Thyroid gland (tissue), 4 donors: ENCODE measurements at regions of chr2 and their contacts with region 1.

Region 1: DNA sequence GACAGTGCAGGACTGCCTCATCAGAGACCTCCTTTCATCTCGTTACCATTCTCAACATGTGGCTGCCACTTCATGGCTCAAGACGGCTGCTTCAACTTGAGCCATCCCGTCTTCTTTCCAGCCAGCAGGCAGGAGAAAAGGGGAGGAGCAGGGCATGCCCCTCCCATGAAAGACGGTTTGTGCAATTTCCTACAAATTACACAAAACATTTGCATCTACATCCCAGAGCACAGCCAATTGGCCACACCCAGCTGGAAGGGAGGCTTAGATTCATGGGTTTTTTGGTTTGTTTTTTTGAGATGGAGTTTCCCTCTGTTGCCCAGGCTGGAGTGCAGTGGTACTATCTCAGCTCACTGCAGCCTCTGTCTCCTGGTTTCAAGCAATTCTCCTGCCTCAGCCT is 11.8 kb downstream of the UCN start:
- DNase-seq: no peak
- H3K4me3 ChIP-seq: no peak overlapping the region
- H3K27ac ChIP-seq: no peak overlapping the region
- H3K4me1 ChIP-seq: peaks cover 7 to 16% of the 10 kb centered on the region in 2 donors
- H3K27me3 ChIP-seq: no peaks in the 10 kb centered on the region
- CTCF ChIP-seq: no peak
- POLR2A ChIP-seq: no peak

Region 2: DNA sequence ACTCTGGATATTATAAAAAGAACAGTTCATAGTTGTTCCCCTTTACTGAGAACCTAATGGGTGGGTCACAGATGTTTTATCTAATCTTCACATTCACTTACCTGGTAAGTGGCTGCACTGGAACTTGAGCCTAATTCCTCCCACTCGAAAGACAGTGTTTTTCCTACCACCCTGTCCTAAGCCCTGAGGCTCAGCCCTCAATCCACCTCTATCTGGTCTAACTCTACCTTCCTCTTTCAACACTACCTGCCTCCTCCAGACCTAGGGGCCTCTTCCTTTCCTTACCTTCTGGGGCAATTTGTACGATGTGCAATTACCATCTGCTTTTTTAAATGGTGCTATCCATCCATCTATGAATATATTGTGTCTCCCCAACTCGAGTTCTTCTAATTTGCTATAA is 1304.5 kb before region 1 on chr2:
- intact Hi-C with region 1: no loop called
- DNase-seq: no peak
- H3K4me3 ChIP-seq: no peak overlapping the region
- H3K27ac ChIP-seq: peak overlapping the region in 1 of 3 donors; percentile 27
- H3K4me1 ChIP-seq: peaks cover 7 to 12% of the 10 kb centered on the region in 2 donors
- H3K27me3 ChIP-seq: no peaks in the 10 kb centered on the region
- CTCF ChIP-seq: no peak
- POLR2A ChIP-seq: no peak

Region 3: GRCh38 chr2:27016801-27017325 is 279.6 kb before region 1 on chr2:
- intact Hi-C with region 1: no loop called
- DNase-seq: peak; percentile 72 to 76
- H3K4me3 ChIP-seq: no peak overlapping the region
- H3K27ac ChIP-seq: no peak overlapping the region
- H3K4me1 ChIP-seq: peaks cover 6 to 20% of the 10 kb centered on the region in 2 donors
- H3K27me3 ChIP-seq: no peaks in the 10 kb centered on the region
- CTCF ChIP-seq: peak in 5 of 6 experiments; percentile 49 to 80 (median 70)
- POLR2A ChIP-seq: no peak

Region 4: DNA sequence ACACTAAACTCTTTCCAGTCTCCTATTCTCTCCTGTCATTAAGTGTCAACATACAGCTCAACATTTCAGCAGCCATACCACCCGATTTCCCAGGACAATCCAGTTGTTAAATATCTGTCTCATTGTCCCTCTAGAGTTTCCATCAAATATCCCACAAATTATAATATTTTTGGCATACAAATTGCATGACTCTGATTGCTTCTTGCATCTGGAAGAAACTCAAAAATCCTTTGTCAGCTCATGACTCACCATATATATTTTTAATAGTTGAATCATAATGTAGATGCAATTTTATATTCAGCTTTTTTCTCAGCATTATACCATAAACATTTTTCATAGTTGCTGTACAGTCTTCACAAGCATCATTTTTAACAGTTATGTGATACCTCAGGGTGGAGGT is 40.8 kb before region 1 on chr2:
- intact Hi-C with region 1: loop called (anchors 5 kb)
- DNase-seq: no peak
- H3K4me3 ChIP-seq: no peak overlapping the region
- H3K27ac ChIP-seq: no peak overlapping the region
- H3K4me1 ChIP-seq: no peaks in the 10 kb centered on the region
- H3K27me3 ChIP-seq: no peaks in the 10 kb centered on the region
- CTCF ChIP-seq: no peak
- POLR2A ChIP-seq: no peak

Region 5: DNA sequence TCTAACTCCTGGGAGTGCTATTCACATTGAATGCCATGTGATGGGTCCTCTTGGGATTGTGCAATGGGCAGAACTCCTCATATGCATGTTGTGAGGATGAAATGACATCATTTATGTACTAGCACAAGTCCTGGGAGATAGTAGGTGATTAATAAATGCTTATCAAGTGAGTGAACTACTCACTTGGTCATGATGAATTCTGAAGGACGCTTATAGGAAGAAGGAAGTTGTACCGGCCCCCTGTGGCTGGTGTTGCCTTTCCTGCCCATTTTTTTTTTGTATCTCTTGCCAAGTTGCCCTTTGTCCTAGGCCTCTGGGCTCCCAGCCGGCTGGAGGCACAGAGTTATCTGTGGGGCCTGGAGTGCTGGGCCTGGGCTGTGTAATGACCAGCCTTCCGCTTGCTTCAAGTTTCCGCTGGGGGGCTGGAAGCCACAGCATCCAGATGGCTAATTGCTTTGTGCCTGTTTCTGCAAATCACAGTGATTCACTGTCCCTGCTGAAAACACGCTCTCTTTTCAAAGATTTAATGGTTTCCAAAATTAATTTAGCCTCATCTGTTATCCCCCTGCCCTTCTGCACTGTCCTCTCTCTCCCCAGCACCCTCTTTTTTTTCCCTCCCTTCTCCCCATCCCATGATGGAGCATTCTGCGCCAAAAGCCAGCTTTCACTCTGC is 441.3 kb after region 1 on chr2:
- intact Hi-C with region 1: no loop called
- DNase-seq: no peak
- H3K4me3 ChIP-seq: no peak overlapping the region
- H3K27ac ChIP-seq: peak overlapping the region in 2 of 3 donors; percentile 9 to 23
- H3K4me1 ChIP-seq: peaks cover 0 to 19% of the 10 kb centered on the region in 2 donors
- H3K27me3 ChIP-seq: no peaks in the 10 kb centered on the region
- CTCF ChIP-seq: no peak
- POLR2A ChIP-seq: no peak